Mammary epithelial cell (primary cell): ENCODE measurements at regions of chr22 and their contacts with region 1.

Region 1: GRCh38 chr22:36123673-36124630 is 36.6 kb downstream of the APOL3 start:
- DNase-seq: peak; percentile 88
- H3K4me3 ChIP-seq: peak overlapping the region in 1 of 3 experiments; percentile 45
- H3K27ac ChIP-seq: peak overlapping the region; percentile 23
- H3K4me1 ChIP-seq: no peaks in the 10 kb centered on the region
- H3K27me3 ChIP-seq: no peaks in the 10 kb centered on the region
- CTCF ChIP-seq: peak; percentile 91 to 99

Region 2: GRCh38 chr22:35350539-35351503 is 773.1 kb before region 1 on chr22:
- CTCF ChIA-PET with region 1: no interaction called
- dilution Hi-C with region 1: no loop called
- in situ Hi-C with region 1: no loop called
- intact Hi-C with region 1: loop called (anchors 1 kb)
- DNase-seq: peak; percentile 84
- H3K4me3 ChIP-seq: peak overlapping the region; percentile 50 to 52 (median 51)
- H3K27ac ChIP-seq: peak overlapping the region; percentile 47
- H3K4me1 ChIP-seq: peaks cover 8% of the 10 kb centered on the region
- H3K27me3 ChIP-seq: no peaks in the 10 kb centered on the region
- CTCF ChIP-seq: peak; percentile 71 to 82

Region 3: DNA sequence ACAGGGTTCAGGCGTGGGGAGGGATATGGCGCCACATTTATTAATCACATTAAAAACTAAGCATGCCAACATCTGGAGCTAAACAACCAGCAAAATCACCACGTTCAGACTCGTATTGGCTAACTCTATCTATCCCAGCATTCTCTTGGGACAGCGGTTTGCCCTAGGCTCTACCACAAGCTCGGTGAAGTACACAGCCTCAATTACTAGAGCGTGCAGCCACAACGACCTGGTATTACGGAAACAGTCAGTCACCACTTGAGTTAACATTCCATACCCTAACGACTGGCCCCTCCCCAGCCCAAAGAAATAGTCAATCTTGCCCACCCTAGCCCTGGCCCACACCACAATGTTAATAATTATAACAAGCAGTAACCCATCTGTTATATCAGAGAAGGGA is 374.1 kb before region 1 on chr22:
- CTCF ChIA-PET with region 1: no interaction called
- dilution Hi-C with region 1: no loop called
- in situ Hi-C with region 1: no loop called
- intact Hi-C with region 1: loop called (anchors 10 kb)
- DNase-seq: no peak
- H3K4me3 ChIP-seq: no peak overlapping the region
- H3K27ac ChIP-seq: no peak overlapping the region
- H3K4me1 ChIP-seq: no peaks in the 10 kb centered on the region
- H3K27me3 ChIP-seq: no peaks in the 10 kb centered on the region
- CTCF ChIP-seq: no peak

Region 4: DNA sequence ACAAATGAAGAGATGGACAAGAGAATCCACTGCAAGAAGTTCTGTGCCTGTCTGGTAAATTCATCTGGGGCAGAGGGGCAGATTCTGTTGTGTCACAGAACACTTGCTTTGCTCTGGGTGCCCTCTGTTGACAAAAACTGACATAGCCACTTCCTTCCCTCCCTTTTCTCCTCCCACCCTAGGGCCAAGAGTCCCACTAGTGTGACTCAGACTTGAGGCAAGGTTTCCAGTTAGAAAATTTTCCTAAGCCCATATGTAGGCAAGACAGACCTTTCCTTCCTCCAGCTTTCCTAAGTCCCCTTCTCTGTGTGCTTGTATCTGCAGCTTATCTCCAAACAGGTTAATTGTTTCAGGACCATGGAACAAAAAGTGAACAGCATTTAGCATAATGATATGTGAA is 202.2 kb before region 1 on chr22:
- CTCF ChIA-PET with region 1: no interaction called
- dilution Hi-C with region 1: no loop called
- in situ Hi-C with region 1: loop called in 1 of 2 experiments (anchors 10 kb)
- intact Hi-C with region 1: no loop called
- DNase-seq: peak; percentile 87
- H3K4me3 ChIP-seq: no peak overlapping the region
- H3K27ac ChIP-seq: peak overlapping the region; percentile 27
- H3K4me1 ChIP-seq: peaks cover 32% of the 10 kb centered on the region
- H3K27me3 ChIP-seq: no peaks in the 10 kb centered on the region
- CTCF ChIP-seq: peak; percentile 46 to 74

Region 5: GRCh38 chr22:35930933-35931332 is 193.0 kb before region 1 on chr22:
- CTCF ChIA-PET with region 1: no interaction called
- dilution Hi-C with region 1: no loop called
- in situ Hi-C with region 1: loop called (anchors 10 kb)
- intact Hi-C with region 1: loop called (anchors 1 kb)
- DNase-seq: peak; percentile 44
- H3K4me3 ChIP-seq: no peak overlapping the region
- H3K27ac ChIP-seq: no peak overlapping the region
- H3K4me1 ChIP-seq: peaks cover 10% of the 10 kb centered on the region
- H3K27me3 ChIP-seq: no peaks in the 10 kb centered on the region
- CTCF ChIP-seq: peak; percentile 41 to 72